ENCODE measurements at regions of chr1 and their contacts with region 1.

Region 1: DNA sequence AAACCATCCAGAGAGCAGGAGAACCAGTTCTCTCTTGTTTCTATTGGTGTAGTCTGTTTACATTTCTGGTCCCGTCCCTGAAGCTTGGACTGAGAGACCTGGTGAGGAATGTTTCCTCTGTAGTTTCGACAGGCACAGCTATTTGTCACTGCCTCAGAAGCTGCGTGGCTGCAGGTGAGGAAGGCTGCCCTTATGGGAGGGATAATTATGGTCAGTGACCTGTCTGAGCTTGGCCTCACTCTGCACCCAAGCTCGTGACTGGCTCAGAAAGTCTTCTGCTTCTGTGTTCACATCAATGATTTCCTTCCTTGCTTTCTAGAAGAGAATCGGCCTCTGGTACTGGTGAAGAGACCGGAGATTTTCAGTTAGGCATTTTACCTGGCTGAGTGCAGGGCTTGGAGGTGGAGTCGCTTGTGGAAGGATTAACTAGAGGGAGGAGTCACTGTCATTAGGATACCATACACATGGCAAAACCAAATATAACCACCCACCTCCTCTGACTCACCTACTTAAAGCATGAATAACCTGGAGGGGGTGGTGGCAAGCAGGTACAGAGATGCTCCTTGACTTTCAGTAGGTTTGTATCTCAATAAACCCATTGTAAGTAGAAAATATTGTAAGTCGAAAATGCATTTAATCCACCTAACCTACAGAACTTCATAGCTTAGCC is 19.9 kb upstream of the WDR26 start:
- DNase-seq: no peak
- H3K4me3 ChIP-seq: no peak overlapping the region
- H3K27ac ChIP-seq: no peak overlapping the region
- H3K4me1 ChIP-seq: peaks cover 9% of the 10 kb centered on the region
- H3K27me3 ChIP-seq: no peaks in the 10 kb centered on the region
- CTCF ChIP-seq: no peak
- EP300 ChIP-seq: no peak
- POLR2A ChIP-seq: no peak

Region 2: DNA sequence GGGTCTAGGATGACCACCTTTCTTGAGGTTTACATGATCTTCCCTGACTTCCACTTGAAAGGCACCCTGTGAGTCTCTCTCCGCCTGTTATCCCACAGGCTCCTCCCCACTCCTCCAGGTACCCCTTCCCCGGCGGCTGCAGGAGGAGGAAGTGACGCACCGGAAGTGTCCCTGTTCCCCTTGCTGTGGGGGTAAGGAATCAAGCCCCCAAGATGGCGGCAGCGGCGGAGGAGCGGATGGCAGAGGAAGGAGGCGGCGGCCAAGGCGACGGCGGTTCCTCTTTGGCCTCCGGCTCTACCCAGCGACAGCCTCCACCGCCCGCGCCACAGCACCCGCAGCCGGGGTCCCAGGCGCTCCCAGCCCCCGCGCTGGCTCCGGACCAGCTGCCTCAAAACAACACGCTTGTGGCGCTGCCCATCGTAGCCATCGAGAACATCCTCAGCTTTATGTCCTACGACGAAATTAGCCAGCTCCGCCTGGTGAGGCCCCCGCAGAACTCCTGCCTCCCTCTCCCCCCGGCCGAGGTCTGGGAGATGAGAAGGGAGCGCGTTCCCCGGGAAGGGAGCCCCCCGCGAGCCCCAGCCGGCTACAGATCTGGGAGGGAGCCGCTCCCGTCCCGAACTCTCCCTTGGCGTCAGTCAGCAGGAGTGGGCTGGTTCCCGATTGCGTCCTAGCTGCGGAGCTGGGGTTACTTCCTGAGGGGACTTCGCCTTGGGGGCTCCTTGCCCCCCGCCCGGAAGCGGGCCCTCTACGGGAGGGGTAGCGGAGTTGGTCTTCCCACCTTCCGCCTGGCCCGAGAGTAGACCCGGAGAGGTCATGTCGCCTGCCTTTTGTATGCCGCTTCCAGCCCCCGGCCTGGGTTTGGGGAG is 340.4 kb before region 1 on chr1 and contains the start of gene FBXO28:
- intact Hi-C with region 1: loop called in 1 of 4 experiments (anchors 10 kb)
- DNase-seq: peak; percentile 94 to 96 (median 95)
- H3K4me3 ChIP-seq: peak within 1 kb of the TSS; percentile 98
- H3K27ac ChIP-seq: peak within 1 kb of the TSS; percentile 83 to 92
- H3K4me1 ChIP-seq: peaks cover 1% of the 10 kb centered on the region
- H3K27me3 ChIP-seq: no peaks in the 10 kb centered on the region
- CTCF ChIP-seq: no peak
- EP300 ChIP-seq: no peak
- POLR2A ChIP-seq: peak; percentile 91
- total RNA-seq, gene FBXO28: 18.2 to 31.7 (median 27.0) TPM

Region 3: GRCh38 chr1:224387302-224387912 is 67.1 kb before region 1 on chr1:
- intact Hi-C with region 1: no loop called
- DNase-seq: no peak
- H3K4me3 ChIP-seq: no peak overlapping the region
- H3K27ac ChIP-seq: no peak overlapping the region
- H3K4me1 ChIP-seq: no peaks in the 10 kb centered on the region
- H3K27me3 ChIP-seq: no peaks in the 10 kb centered on the region
- CTCF ChIP-seq: no peak
- EP300 ChIP-seq: no peak
- POLR2A ChIP-seq: no peak

Region 4: DNA sequence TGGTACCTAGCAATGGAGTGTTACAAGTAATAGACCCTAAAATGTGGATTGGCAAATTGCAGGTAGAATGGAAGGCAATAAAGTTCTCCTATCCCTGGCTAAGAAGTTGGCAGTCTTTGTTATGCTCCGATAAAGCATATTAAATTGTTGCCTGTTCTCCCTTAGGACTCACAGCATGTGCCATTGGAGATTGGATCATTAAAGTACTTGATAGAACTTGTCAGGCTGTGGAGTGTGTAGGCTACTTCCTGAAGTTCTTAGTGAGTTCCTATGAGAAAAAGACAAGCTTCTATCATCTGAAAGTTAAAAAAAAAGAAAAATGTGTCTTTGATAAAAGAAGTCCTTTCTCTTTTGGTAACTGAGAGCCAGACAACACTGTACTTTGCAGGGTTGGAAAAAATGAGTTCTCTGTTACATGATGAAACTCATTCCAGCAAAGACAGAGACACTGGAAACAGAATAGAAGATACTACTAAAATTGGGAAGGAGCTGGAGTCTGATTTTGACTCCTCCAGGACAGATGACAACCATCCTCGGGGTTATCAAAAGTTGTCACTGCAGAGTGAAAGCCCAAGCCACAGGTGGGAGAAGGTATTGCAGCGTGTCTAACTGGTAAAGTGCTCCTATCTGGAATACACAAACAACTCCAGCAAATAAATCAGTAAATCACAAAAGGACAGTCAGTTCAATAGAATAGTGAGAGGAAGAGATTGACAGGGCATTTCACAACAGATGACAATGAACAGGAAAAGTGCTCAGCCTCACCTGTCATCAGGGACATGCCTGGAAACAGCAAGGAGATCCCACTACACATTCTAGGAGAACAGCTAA is 67.6 kb after region 1 on chr1:
- intact Hi-C with region 1: no loop called
- DNase-seq: no peak
- H3K4me3 ChIP-seq: no peak overlapping the region
- H3K27ac ChIP-seq: no peak overlapping the region
- H3K4me1 ChIP-seq: no peaks in the 10 kb centered on the region
- H3K27me3 ChIP-seq: no peaks in the 10 kb centered on the region
- CTCF ChIP-seq: no peak
- EP300 ChIP-seq: no peak
- POLR2A ChIP-seq: no peak

Region 5: DNA sequence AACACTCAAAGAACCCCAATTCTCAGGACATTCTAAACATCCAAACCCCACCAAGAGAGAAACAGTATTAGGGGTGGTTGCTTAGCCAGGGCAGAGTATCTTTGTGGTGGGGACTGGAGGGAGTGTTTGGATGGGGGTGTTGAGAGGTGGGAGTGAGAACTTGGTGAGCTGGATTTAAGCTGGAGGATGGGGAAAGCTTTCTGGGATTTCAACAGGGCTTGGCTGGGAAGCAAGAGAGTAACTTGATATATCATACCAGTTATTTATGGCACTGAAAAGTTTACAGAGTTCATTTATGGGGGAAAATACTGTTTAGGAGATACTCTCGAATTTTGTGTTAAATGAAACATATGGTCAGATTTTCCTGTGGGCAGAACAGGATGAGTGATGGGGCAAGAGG is 154.8 kb after region 1 on chr1:
- intact Hi-C with region 1: no loop called
- DNase-seq: no peak
- H3K4me3 ChIP-seq: no peak overlapping the region
- H3K27ac ChIP-seq: no peak overlapping the region
- H3K4me1 ChIP-seq: no peaks in the 10 kb centered on the region
- H3K27me3 ChIP-seq: no peaks in the 10 kb centered on the region
- CTCF ChIP-seq: no peak
- EP300 ChIP-seq: no peak
- POLR2A ChIP-seq: no peak

Measured in ovary (tissue), 10 donors.